Gastrocnemius medialis (tissue), 4 donors: ENCODE measurements at regions of chr3 and their contacts with region 1.

Region 1: GRCh38 chr3:15964605-15965442 is 167.0 kb upstream of the ANKRD28 start:
- DNase-seq: peak; percentile 88 to 93
- ATAC-seq: peak; percentile 97 to 99
- H3K4me3 ChIP-seq: peak overlapping the region; percentile 14 to 41 (median 26)
- H3K27ac ChIP-seq: peak overlapping the region; percentile 85 to 93 (median 90)
- H3K4me1 ChIP-seq: peaks cover 21% of the 10 kb centered on the region in 2 donors
- H3K27me3 ChIP-seq: no peaks in the 10 kb centered on the region
- CTCF ChIP-seq: no peak
- POLR2A ChIP-seq: peak; percentile 64 to 83

Region 2: GRCh38 chr3:15629860-15630597 is 334.8 kb before region 1 on chr3:
- in situ Hi-C with region 1: no loop called
- intact Hi-C with region 1: loop called (anchors 10 kb)
- DNase-seq: peak; percentile 69 to 76
- ATAC-seq: peak; percentile 91 to 93
- H3K4me3 ChIP-seq: peak overlapping the region; percentile 24 to 50 (median 37)
- H3K27ac ChIP-seq: peak overlapping the region; percentile 77 to 90 (median 84)
- H3K4me1 ChIP-seq: peaks cover 25 to 27% of the 10 kb centered on the region in 2 donors
- H3K27me3 ChIP-seq: no peaks in the 10 kb centered on the region
- CTCF ChIP-seq: peak; percentile 77 to 85 (median 78)
- POLR2A ChIP-seq: no peak

Region 3: DNA sequence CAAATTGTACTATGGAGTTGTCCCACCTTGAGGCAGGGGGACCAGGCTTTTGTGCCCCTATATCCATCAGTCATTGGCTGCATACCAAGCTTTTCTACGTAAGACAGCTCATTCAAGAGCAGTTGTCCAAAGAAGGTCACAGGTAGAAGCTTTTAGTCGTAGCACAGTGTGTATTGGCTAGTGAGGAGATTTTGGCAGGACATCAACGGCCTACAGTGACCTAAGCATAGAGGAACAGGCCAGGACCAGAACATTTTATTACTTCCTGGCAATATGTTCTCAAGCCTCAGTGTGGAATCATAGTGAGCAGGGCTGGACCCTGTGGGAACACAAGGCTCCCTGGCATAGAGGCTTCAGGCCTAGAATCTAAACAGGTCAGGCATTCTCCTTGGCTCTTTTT is 61.7 kb before region 1 on chr3:
- in situ Hi-C with region 1: no loop called
- intact Hi-C with region 1: loop called (anchors 1 kb)
- DNase-seq: peak; percentile 80 to 87
- ATAC-seq: peak; percentile 84 to 91
- H3K4me3 ChIP-seq: no peak overlapping the region
- H3K27ac ChIP-seq: peak overlapping the region; percentile 81 to 95 (median 87)
- H3K4me1 ChIP-seq: peaks cover 22 to 31% of the 10 kb centered on the region in 2 donors
- H3K27me3 ChIP-seq: no peaks in the 10 kb centered on the region
- CTCF ChIP-seq: no peak
- POLR2A ChIP-seq: peak in 1 of 2 donors; percentile 21

Region 4: DNA sequence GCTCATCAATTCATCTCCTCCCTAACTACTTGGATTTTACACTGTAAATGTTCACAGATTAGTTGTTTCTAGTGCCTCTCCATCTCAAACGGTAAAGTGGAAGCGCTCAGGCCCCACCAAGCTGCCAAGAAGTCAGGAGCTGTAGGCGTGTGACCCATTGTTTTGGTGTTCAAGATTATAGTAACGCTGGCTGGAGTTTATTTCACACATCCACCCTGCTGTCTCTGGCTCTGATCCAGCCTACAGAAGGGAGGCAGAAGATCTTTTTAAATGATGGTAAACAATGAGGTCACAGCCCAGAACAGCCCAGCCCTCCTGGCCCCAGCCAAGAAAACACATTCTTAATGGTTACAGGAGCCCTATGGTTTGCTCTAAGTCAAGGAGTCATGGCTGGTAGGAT is 184.0 kb after region 1 on chr3:
- in situ Hi-C with region 1: no loop called
- intact Hi-C with region 1: no loop called
- DNase-seq: peak; percentile 75 to 78
- ATAC-seq: peak; percentile 52 to 75
- H3K4me3 ChIP-seq: no peak overlapping the region
- H3K27ac ChIP-seq: peak overlapping the region; percentile 73 to 85 (median 76)
- H3K4me1 ChIP-seq: peaks cover 49 to 51% of the 10 kb centered on the region in 2 donors
- H3K27me3 ChIP-seq: no peaks in the 10 kb centered on the region
- CTCF ChIP-seq: no peak
- POLR2A ChIP-seq: no peak